Heart right ventricle (tissue), 16 donors: ENCODE measurements at regions of chr7 and their contacts with region 1.

Region 1: GRCh38 chr7:10156972-10157371 is 816.7 kb upstream of the PHF14 start:
- DNase-seq: peak in 1 of 2 donors; percentile 18
- ATAC-seq: peak; percentile 43 to 96 (median 86)
- H3K4me3 ChIP-seq: peak overlapping the region in 7 of 10 donors; percentile 19 to 52 (median 43)
- H3K27ac ChIP-seq: peak overlapping the region in 9 of 10 donors; percentile 32 to 84 (median 52)
- H3K4me1 ChIP-seq: peaks cover 0 to 8% (median 0%) of the 10 kb centered on the region in 9 donors
- H3K27me3 ChIP-seq: no peaks in the 10 kb centered on the region
- CTCF ChIP-seq: no peak

Region 2: DNA sequence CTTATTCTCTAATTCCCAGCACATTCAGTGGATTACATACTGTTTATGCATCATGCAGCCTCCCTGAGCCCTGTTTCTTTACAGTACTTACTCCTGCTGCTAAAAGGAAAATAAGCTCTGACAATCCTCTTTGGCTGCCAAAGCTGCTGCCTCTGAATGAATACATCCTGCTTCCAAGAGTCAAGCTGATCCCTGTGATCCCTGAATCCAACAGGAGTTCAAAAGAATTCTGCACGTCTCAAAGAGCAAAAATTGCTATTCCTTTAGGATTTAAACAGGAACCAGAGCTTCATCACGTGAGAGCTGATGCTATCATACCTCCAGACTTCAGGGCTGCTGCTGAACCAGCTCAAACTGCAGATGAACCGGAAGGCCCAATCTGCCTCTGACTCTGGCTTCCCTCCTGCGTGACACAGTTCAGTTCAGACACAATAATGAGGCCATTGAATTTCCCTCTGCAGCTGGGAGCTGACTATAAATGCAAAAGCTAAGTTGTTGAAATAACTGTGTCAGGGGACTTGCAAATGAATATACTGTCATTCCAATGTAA is 34.3 kb before region 1 on chr7:
- intact Hi-C with region 1: loop called in 1 of 10 experiments (anchors 5 kb)
- DNase-seq: peak in 1 of 2 donors; percentile 60
- ATAC-seq: peak; percentile 62 to 94 (median 91)
- H3K4me3 ChIP-seq: no peak overlapping the region
- H3K27ac ChIP-seq: peak overlapping the region in 5 of 10 donors; percentile 8 to 65 (median 34)
- H3K4me1 ChIP-seq: peaks cover 0 to 27% (median 10%) of the 10 kb centered on the region in 9 donors
- H3K27me3 ChIP-seq: no peaks in the 10 kb centered on the region
- CTCF ChIP-seq: no peak

Region 3: DNA sequence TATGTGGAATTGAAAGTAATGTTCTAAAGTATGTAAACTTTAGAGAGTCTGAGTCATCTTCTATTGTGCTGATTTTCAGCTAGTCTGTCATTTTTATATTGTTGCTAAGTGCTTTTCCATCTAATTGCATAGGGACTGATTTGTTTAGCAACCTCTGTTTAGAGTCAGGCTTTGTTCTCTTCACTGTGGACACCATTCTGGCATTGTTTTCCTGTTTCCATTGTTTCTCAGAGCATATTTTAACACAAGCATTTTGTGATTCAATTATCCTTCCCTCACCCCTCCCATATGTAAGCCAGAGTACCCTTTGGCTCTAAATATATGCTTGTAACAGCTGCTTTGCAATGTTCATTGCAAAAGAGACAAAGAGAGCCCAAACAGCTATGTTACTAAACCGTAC is 68.3 kb after region 1 on chr7:
- intact Hi-C with region 1: loop called in 1 of 10 experiments (anchors 10 kb)
- DNase-seq: no peak
- ATAC-seq: peak in 5 of 8 donors; percentile 22 to 67 (median 41)
- H3K4me3 ChIP-seq: peak overlapping the region in 1 of 10 donors; percentile 16
- H3K27ac ChIP-seq: peak overlapping the region in 6 of 10 donors; percentile 3 to 45 (median 30)
- H3K4me1 ChIP-seq: peaks cover 0 to 40% (median 8%) of the 10 kb centered on the region in 9 donors
- H3K27me3 ChIP-seq: no peaks in the 10 kb centered on the region
- CTCF ChIP-seq: no peak

Region 4: GRCh38 chr7:10913457-10913856 is 756.5 kb after region 1 on chr7:
- intact Hi-C with region 1: no loop called
- DNase-seq: no peak
- ATAC-seq: no peak
- H3K4me3 ChIP-seq: no peak overlapping the region
- H3K27ac ChIP-seq: no peak overlapping the region
- H3K4me1 ChIP-seq: no peaks in the 10 kb centered on the region
- H3K27me3 ChIP-seq: no peaks in the 10 kb centered on the region
- CTCF ChIP-seq: no peak